Naive thymus-derived CD4-positive, alpha-beta T cell (primary cell): ENCODE measurements at regions of chr20 and their contacts with region 1.

Region 1: GRCh38 chr20:51385646-51386530 is 156.6 kb downstream of the NFATC2 start:
- DNase-seq: peak in 4 of 9 donors; percentile 10 to 27 (median 20)
- ATAC-seq: peak; percentile 48
- H3K4me3 ChIP-seq: no peak overlapping the region
- H3K4me3 Mint-ChIP-seq: no peak overlapping the region
- H3K27ac ChIP-seq: no peak overlapping the region
- H3K27ac Mint-ChIP-seq: peak overlapping the region in 8 of 9 donors; percentile 4 to 77 (median 62)
- H3K4me1 ChIP-seq: peaks cover 0 to 67% of the 10 kb centered on the region in 2 donors
- H3K4me1 Mint-ChIP-seq: peaks cover 0 to 61% (median 5%) of the 10 kb centered on the region in 7 donors
- H3K27me3 ChIP-seq: no peaks in the 10 kb centered on the region
- H3K27me3 Mint-ChIP-seq: no peaks in the 10 kb centered on the region

Region 2: GRCh38 chr20:51417250-51418136 is 31.6 kb after region 1 on chr20:
- CTCF ChIA-PET with region 1: no interaction called
- POLR2A ChIA-PET with region 1: no interaction called
- intact Hi-C with region 1: loop called (anchors 1 to 5 kb)
- DNase-seq: no peak
- ATAC-seq: peak; percentile 57
- H3K4me3 ChIP-seq: no peak overlapping the region
- H3K4me3 Mint-ChIP-seq: peak overlapping the region in 3 of 10 donors; percentile 23 to 37 (median 31)
- H3K27ac ChIP-seq: no peak overlapping the region
- H3K27ac Mint-ChIP-seq: peak overlapping the region; percentile 9 to 87 (median 72)
- H3K4me1 ChIP-seq: peaks cover 0 to 78% of the 10 kb centered on the region in 2 donors
- H3K4me1 Mint-ChIP-seq: peaks cover 10 to 69% (median 28%) of the 10 kb centered on the region in 7 donors
- H3K27me3 ChIP-seq: no peaks in the 10 kb centered on the region
- H3K27me3 Mint-ChIP-seq: no peaks in the 10 kb centered on the region

Region 3: GRCh38 chr20:51423290-51423667 is 37.4 kb after region 1 on chr20:
- CTCF ChIA-PET with region 1: interaction called, 3 read pairs
- POLR2A ChIA-PET with region 1: no interaction called
- intact Hi-C with region 1: loop called (anchors 1 to 5 kb)
- DNase-seq: no peak
- ATAC-seq: no peak
- H3K4me3 ChIP-seq: no peak overlapping the region
- H3K4me3 Mint-ChIP-seq: no peak overlapping the region
- H3K27ac ChIP-seq: no peak overlapping the region
- H3K27ac Mint-ChIP-seq: peak overlapping the region in 2 of 9 donors; percentile 28 to 43
- H3K4me1 ChIP-seq: peaks cover 0 to 75% of the 10 kb centered on the region in 2 donors
- H3K4me1 Mint-ChIP-seq: peaks cover 10 to 65% (median 27%) of the 10 kb centered on the region in 7 donors
- H3K27me3 ChIP-seq: no peaks in the 10 kb centered on the region
- H3K27me3 Mint-ChIP-seq: no peaks in the 10 kb centered on the region

Region 4: DNA sequence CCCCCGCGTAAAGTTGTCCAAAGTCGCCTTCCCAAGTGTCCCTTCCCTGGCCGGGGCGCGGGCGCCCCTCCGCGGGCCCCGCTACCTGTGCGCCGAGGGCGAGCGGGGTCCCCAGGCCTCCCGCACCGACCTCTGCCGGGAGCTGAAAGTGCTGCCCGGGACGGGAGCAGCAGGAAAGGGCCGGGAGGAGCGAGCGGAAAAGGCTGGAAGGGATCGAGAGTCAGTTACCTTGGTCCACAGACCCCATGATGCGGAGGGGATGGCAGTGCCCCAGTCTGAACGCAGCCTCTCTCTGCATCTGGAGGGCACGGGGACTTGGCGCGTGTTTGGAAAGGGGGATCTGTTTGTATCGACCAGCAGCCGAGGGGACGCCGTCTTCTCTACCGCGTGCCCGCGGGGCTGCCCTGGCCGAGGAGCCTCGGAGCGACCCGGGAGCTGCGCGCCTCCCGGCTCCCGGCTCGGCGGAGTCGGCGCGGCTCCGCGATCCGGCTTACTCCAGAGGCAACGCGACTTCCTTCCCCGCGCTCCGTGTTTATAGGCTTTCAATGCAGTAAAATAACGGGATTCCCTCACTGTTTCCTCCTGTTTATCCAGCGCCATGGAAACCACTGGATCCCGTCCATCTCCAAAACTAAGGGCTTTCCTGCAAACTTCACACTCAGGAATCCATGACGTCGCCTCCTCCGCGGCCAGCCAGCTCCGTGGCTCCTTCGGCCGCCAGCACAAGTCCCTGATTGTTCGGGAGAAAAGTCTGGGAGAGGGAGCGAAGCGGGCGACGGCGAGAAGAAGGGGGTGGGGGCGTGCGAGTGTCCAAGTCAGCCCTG is 176.7 kb after region 1 on chr20:
- CTCF ChIA-PET with region 1: interaction called, 7 read pairs
- POLR2A ChIA-PET with region 1: no interaction called
- intact Hi-C with region 1: loop called in 1 of 2 experiments (anchors 1 kb)
- DNase-seq: peak in 5 of 9 donors; percentile 12 to 32 (median 21)
- ATAC-seq: peak; percentile 32
- H3K4me3 ChIP-seq: peak overlapping the region; percentile 49
- H3K4me3 Mint-ChIP-seq: peak overlapping the region; percentile 66 to 84 (median 74)
- H3K27ac ChIP-seq: no peak overlapping the region
- H3K27ac Mint-ChIP-seq: no peak overlapping the region
- H3K4me1 ChIP-seq: peaks cover 9 to 11% of the 10 kb centered on the region in 2 donors
- H3K4me1 Mint-ChIP-seq: peaks cover 10 to 36% (median 19%) of the 10 kb centered on the region in 7 donors
- H3K27me3 ChIP-seq: peaks cover 16 to 37% of the 10 kb centered on the region in 2 donors
- H3K27me3 Mint-ChIP-seq: peaks cover 38 to 78% (median 53%) of the 10 kb centered on the region in 5 donors

Region 5: DNA sequence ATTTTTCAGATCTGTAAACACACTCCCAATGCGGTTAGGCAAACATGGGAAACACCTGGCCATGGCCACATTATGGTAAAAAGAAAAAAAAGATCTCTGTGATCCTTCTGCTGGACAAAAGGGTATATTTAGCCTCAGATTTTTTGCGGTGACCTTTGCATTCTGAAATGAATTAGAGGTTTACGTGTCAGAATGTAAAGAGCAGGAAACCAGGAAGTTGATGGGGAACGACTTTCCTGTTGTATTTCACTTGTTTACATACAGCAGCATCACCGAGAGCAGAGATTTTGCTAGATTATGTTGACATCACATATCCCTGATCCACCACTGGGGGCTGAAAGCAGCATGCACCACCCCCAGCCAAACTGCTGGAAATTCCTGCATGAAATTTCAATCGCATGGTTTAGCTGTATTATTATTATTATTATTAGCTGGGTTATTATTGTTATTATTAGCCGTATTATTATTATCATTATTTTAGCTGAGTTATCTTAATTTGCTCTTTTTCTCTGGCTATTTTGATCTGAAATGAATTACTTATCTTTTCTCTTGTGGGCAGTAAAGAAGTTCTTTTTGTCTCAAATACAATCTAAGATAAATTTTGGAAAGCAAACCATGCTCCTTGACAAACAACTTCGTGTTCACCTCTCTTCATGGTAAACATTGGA is 616.2 kb after region 1 on chr20:
- CTCF ChIA-PET with region 1: no interaction called
- POLR2A ChIA-PET with region 1: no interaction called
- intact Hi-C with region 1: no loop called
- DNase-seq: no peak
- ATAC-seq: no peak
- H3K4me3 ChIP-seq: no peak overlapping the region
- H3K4me3 Mint-ChIP-seq: no peak overlapping the region
- H3K27ac ChIP-seq: no peak overlapping the region
- H3K27ac Mint-ChIP-seq: no peak overlapping the region
- H3K4me1 ChIP-seq: no peaks in the 10 kb centered on the region
- H3K4me1 Mint-ChIP-seq: peaks cover 0 to 2% (median 0%) of the 10 kb centered on the region in 7 donors
- H3K27me3 ChIP-seq: no peaks in the 10 kb centered on the region
- H3K27me3 Mint-ChIP-seq: peaks cover 0 to 28% (median 17%) of the 10 kb centered on the region in 5 donors